ENCODE measurements at regions of chr2 and their contacts with region 1.

Region 1: GRCh38 chr2:233053928-233054784 is 6.0 kb upstream of the INPP5D start:
- DNase-seq: peak; percentile 59 to 84
- ATAC-seq: peak; percentile 80 to 95; a peak in 4 of 6 replicates
- H3K4me3 ChIP-seq: no peak overlapping the region
- H3K27ac ChIP-seq: peak overlapping the region; percentile 8 to 65; a peak in 4 of 6 replicates
- H3K4me1 ChIP-seq: 0 out of 3 replicates have a peak, but pooled peaks cover 12% of the 10 kb centered on the region
- CTCF ChIP-seq: peak; percentile 84
- EP300 ChIP-seq: no peak
- POLR2A ChIP-seq: no peak
- RAD21 ChIP-seq: peak; percentile 83 to 86

Region 2: DNA sequence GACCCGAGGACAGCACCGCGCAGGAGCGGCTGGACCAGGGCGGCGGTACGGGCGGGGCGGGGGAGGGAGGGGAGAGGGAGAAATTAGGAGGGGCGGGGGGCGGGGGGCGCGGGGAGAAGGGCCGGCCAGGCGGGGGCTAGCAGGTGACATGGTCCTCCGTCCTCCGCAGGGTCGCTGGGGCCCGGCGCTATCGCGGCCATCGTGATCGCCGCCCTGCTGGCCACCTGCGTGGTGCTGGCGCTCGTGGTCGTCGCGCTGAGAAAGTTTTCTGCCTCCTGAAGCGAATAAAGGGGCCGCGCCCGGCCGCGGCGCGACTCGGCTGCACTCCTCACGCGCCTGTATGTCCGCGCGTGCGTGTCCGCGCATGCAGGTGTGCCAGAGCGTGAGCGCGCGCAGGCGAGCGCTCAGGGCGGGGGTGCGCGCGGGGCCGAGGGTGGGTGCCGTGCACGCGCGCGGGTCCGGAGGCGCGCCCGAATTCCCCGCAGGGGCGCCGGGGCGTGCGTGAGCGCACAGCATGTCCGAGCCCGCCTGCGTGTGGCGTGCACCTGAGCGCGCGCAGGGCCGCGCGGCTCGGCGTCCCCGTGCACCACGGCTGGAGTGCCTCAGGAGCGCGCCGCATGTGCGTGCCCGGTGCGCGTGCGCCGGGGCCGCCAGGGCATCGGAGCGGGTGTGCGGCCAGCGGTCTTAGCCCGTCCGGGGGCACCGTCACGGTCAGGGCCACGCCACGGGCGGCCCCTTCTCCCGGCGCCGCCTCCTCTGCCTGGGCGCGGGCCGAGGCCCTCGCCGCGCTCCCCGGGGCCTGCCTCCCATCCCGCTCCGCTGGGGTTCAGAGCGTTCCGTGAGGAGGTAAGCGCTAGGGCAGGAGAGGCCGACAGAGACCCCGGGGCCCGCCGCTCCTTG is 177.8 kb before region 1 on chr2:
- CTCF ChIA-PET with region 1: interaction called, 10 read pairs
- POLR2A ChIA-PET with region 1: no interaction called
- DNase-seq: peak; percentile 47 to 72
- ATAC-seq: peak; percentile 57 to 67
- H3K4me3 ChIP-seq: peak overlapping the region; percentile 81
- H3K27ac ChIP-seq: peak overlapping the region; percentile 93 to 97
- H3K4me1 ChIP-seq: peaks cover 55% of the 10 kb centered on the region
- CTCF ChIP-seq: 0 out of 3 replicates have a peak, but pooled peaks have one; percentile 18
- EP300 ChIP-seq: no peak
- POLR2A ChIP-seq: peak; percentile 43; the same call in 1 of the 2 replicates
- RAD21 ChIP-seq: no peak; a peak in 1 of 5 replicates

Region 3: GRCh38 chr2:233012301-233012971 is 41.7 kb before region 1 on chr2:
- CTCF ChIA-PET with region 1: interaction called, 12 read pairs
- POLR2A ChIA-PET with region 1: no interaction called
- DNase-seq: no peak
- ATAC-seq: peak in 1 of 2 experiments; percentile 50; a peak in 3 of 6 replicates
- H3K4me3 ChIP-seq: no peak overlapping the region
- H3K27ac ChIP-seq: peak overlapping the region; percentile 51 to 73; a peak in 5 of 6 replicates
- H3K4me1 ChIP-seq: peaks cover 25% of the 10 kb centered on the region
- CTCF ChIP-seq: no peak
- EP300 ChIP-seq: no peak
- POLR2A ChIP-seq: no peak
- RAD21 ChIP-seq: no peak

Region 4: DNA sequence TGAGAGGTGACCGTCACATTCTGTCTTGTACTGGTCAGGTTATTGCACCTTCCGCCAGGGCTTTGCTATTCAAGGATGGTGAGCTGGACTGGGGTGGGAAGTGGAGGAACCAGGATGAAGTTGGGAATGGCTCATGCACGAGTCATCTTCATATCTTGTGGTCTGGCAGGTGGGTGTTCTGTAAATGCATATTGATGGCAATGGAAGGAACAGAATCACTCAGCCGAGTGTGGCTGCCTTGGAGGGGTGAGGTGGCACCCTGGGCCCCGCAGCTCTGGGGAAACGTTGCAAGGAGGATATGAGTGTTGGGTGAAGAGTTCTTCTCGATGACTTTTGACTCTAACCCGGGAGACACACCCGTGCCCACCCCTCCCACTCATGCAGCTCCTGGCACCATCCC is 20.5 kb before region 1 on chr2:
- CTCF ChIA-PET with region 1: interaction called, 52 read pairs
- POLR2A ChIA-PET with region 1: no interaction called
- DNase-seq: no peak
- ATAC-seq: no peak
- H3K4me3 ChIP-seq: no peak overlapping the region
- H3K27ac ChIP-seq: no peak overlapping the region
- H3K4me1 ChIP-seq: peaks cover 2% of the 10 kb centered on the region
- CTCF ChIP-seq: no peak
- EP300 ChIP-seq: no peak
- POLR2A ChIP-seq: no peak
- RAD21 ChIP-seq: no peak

Region 5: GRCh38 chr2:233075966-233076339 is 21.8 kb after region 1 on chr2:
- CTCF ChIA-PET with region 1: interaction called, 20 read pairs
- POLR2A ChIA-PET with region 1: no interaction called
- DNase-seq: no peak
- ATAC-seq: no peak
- H3K4me3 ChIP-seq: no peak overlapping the region
- H3K27ac ChIP-seq: no peak overlapping the region
- H3K4me1 ChIP-seq: no peaks in the 10 kb centered on the region
- CTCF ChIP-seq: no peak
- EP300 ChIP-seq: no peak
- POLR2A ChIP-seq: no peak
- RAD21 ChIP-seq: no peak

Region 6: DNA sequence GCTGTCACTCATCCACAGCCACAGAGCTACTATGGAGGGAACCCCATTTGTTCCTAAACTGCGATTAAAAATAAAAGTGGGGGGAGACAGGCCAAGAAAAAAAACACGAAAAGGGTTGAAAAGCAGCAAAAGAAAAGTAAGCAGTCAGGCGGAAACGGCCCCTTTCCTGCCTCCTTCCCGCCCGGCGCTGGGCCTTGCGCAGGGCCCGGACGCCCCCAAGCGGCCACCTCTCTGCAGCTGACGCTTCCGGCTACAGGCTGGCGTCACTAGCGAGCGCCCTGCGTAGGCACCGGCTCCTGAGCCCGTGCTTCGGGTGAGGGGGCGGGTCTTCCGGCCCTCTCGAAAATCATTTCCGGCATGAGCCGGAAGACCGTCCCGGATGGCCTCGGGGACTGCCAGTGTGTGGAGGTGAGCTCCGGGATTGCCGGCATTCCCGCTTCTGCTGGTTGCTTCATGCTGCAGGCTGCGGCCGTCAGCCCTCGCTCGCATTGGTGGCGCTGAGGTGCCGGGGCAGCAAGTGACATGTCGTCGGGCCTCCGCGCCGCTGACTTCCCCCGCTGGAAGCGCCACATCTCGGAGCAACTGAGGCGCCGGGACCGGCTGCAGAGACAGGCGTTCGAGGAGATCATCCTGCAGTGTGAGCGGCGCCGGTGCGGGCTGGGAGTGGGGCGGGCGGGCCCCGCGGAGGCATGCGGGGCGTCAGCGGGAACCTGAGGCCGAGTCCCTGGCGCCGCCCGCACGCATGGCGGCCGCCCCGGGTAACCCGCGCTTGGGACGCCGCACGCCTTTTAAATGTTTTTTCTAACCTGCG is 197.4 kb after region 1 on chr2 and contains the start of gene ATG16L1:
- CTCF ChIA-PET with region 1: interaction called, 14 read pairs
- POLR2A ChIA-PET with region 1: no interaction called
- DNase-seq: peak; percentile 96 to 98
- ATAC-seq: peak; percentile 95 to 97
- H3K4me3 ChIP-seq: peak within 1 kb of the TSS; percentile 95
- H3K27ac ChIP-seq: peak within 1 kb of the TSS; percentile 91 to 99
- H3K4me1 ChIP-seq: peaks cover 56% of the 10 kb centered on the region
- CTCF ChIP-seq: peak; percentile 98
- EP300 ChIP-seq: no peak
- POLR2A ChIP-seq: peak; percentile 91
- RAD21 ChIP-seq: peak; percentile 97 to 100
- polyA plus RNA-seq, gene ATG16L1: 70.9 and 72.3 TPM in 2 replicates

Measured in A549 (cell line).